A673 (cell line): ENCODE measurements at regions of chr14 and their contacts with region 1.

Region 1: GRCh38 chr14:65164068-65164824 is 61.9 kb upstream of the MAX start:
- DNase-seq: peak; percentile 62
- H3K4me3 ChIP-seq: no peak overlapping the region
- H3K27ac ChIP-seq: no peak overlapping the region
- H3K4me1 ChIP-seq: no peaks in the 10 kb centered on the region
- H3K27me3 ChIP-seq: no peaks in the 10 kb centered on the region
- CTCF ChIP-seq: peak; percentile 66

Region 2: GRCh38 chr14:65131301-65131701 is 32.9 kb before region 1 on chr14:
- CTCF ChIA-PET with region 1: no interaction called
- POLR2A ChIA-PET with region 1: no interaction called
- intact Hi-C with region 1: no loop called
- DNase-seq: no peak
- H3K4me3 ChIP-seq: no peak overlapping the region
- H3K27ac ChIP-seq: no peak overlapping the region
- H3K4me1 ChIP-seq: no peaks in the 10 kb centered on the region
- H3K27me3 ChIP-seq: no peaks in the 10 kb centered on the region
- CTCF ChIP-seq: no peak

Region 3: GRCh38 chr14:65195042-65195719 is 30.9 kb after region 1 on chr14:
- CTCF ChIA-PET with region 1: no interaction called
- POLR2A ChIA-PET with region 1: no interaction called
- intact Hi-C with region 1: no loop called
- DNase-seq: no peak
- H3K4me3 ChIP-seq: no peak overlapping the region
- H3K27ac ChIP-seq: no peak overlapping the region
- H3K4me1 ChIP-seq: no peaks in the 10 kb centered on the region
- H3K27me3 ChIP-seq: no peaks in the 10 kb centered on the region
- CTCF ChIP-seq: no peak

Region 4: DNA sequence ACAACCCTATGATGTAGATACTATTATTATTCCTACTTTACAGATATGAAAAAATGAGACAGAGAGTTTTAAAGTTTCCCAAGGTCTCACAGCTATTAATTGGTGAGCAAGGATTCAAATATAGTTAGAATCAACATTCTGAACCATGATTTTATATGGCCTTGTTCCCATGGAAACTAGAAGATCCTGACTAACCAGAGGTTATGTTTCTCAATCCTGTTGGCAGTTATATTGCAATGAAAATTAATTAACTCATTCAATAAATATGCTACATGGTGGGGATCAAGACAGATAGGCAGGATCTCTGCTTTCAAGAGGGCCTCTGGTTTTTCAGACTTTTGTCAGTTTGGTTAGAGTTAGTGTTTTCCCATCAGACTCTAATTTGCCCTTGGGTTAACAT is 239.0 kb after region 1 on chr14:
- CTCF ChIA-PET with region 1: interaction called, 10 read pairs
- POLR2A ChIA-PET with region 1: no interaction called
- intact Hi-C with region 1: no loop called
- DNase-seq: no peak
- H3K4me3 ChIP-seq: no peak overlapping the region
- H3K27ac ChIP-seq: no peak overlapping the region
- H3K4me1 ChIP-seq: no peaks in the 10 kb centered on the region
- H3K27me3 ChIP-seq: no peaks in the 10 kb centered on the region
- CTCF ChIP-seq: no peak

Region 5: DNA sequence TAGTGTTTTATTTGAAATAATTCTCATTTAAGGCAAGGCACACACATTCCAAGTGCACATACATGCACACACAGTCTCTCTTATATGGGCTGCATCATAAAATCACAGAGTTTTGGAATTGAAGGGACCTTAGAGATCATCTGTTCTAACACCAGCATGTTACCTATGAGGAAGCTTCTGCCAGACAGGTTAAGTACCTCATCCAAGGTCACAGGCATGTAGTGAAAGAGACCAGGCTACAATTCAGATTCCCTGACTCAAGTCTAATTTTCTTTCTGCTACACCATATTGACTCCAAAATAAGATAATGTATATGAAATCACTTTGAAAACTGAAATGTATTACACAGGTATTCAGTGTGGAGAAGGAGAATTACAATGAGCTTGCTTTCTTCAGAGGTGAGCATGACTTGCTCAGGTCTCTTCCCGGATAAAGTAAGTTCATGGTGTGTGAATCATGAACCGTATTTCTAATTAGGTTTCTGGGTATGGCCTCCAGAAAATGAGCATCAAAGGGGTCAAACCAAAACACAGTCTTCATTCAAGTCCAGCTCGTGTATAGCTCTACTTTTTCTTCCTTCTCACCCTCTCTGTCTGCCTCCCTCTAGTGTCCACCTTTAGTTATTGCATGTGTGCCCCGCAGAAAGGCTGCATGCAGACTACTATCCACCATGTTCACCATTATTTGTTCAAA is 660.2 kb after region 1 on chr14:
- CTCF ChIA-PET with region 1: interaction called, 11 read pairs
- POLR2A ChIA-PET with region 1: no interaction called
- intact Hi-C with region 1: loop called (anchors 2 kb)
- DNase-seq: peak; percentile 70
- H3K4me3 ChIP-seq: no peak overlapping the region
- H3K27ac ChIP-seq: no peak overlapping the region
- H3K4me1 ChIP-seq: no peaks in the 10 kb centered on the region
- H3K27me3 ChIP-seq: peaks cover 17% of the 10 kb centered on the region
- CTCF ChIP-seq: peak; percentile 92

Region 6: GRCh38 chr14:65958664-65959562 is 794.7 kb after region 1 on chr14:
- CTCF ChIA-PET with region 1: interaction called, 4 read pairs
- POLR2A ChIA-PET with region 1: no interaction called
- intact Hi-C with region 1: loop called (anchors 1 kb)
- DNase-seq: peak; percentile 45
- H3K4me3 ChIP-seq: no peak overlapping the region
- H3K27ac ChIP-seq: no peak overlapping the region
- H3K4me1 ChIP-seq: no peaks in the 10 kb centered on the region
- H3K27me3 ChIP-seq: no peaks in the 10 kb centered on the region
- CTCF ChIP-seq: peak; percentile 59

Region 7: DNA sequence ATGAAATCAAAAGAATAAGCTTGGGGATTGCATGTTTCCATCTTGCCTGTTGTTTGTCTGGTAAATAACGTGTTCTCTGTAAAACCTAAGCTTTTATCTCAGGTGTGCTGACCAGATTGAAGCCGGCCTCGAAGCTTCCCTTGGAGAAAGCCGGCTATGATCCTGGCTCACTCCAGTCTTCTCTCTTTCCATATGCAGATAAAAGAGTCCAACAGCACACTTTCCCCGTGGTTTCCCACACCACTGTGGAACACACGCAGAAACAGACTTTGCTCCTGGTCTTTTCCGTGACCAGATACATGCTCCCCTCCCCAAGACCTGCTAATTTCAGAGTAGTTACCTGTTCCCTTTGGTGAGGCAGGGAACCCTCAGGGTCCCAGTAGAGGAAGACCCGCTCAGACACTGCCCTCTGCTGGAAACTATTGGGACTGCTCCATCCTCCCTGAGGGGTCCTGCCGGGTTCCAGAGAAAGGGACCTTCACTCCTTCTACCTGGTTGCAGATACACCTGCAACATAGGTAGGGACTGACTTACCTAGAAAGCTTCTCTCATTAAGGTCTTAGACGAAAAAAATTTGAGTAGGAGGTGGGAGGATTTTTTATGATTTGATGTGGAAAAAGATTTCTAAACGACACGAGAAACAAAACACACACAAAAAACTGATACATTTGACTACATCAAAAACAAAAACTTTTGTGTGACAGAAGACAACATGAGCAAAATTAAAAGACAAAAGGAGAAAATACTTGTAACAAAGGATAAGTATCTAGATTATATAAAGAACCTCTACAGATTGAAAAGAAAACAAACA is 906.5 kb after region 1 on chr14:
- CTCF ChIA-PET with region 1: interaction called, 6 read pairs
- POLR2A ChIA-PET with region 1: no interaction called
- intact Hi-C with region 1: loop called (anchors 2 kb)
- DNase-seq: peak; percentile 50
- H3K4me3 ChIP-seq: no peak overlapping the region
- H3K27ac ChIP-seq: no peak overlapping the region
- H3K4me1 ChIP-seq: no peaks in the 10 kb centered on the region
- H3K27me3 ChIP-seq: no peaks in the 10 kb centered on the region
- CTCF ChIP-seq: peak; percentile 90